CD4-positive, alpha-beta T cell (primary cell): ENCODE measurements at regions of chr15 and their contacts with region 1.

Region 1: GRCh38 chr15:62060113-62060895 is at the start of gene VPS13C:
- DNase-seq: peak; percentile 79 to 97 (median 88)
- ATAC-seq: peak; percentile 79
- H3K4me3 ChIP-seq: peak within 1 kb of the TSS; percentile 93
- H3K4me3 Mint-ChIP-seq: peak within 1 kb of the TSS; percentile 92
- H3K27ac ChIP-seq: peak within 1 kb of the TSS; percentile 84 to 87
- H3K27ac Mint-ChIP-seq: peak within 1 kb of the TSS; percentile 88
- H3K4me1 ChIP-seq: peaks cover 9% of the 10 kb centered on the region
- H3K4me1 Mint-ChIP-seq: peaks cover 54% of the 10 kb centered on the region
- H3K27me3 ChIP-seq: peaks cover 0 to 1% of the 10 kb centered on the region in 2 experiments
- H3K27me3 Mint-ChIP-seq: no peaks in the 10 kb centered on the region
- CTCF ChIP-seq: peak; percentile 84
- total RNA-seq, gene VPS13C: 69.7 to 73.2 TPM

Region 2: DNA sequence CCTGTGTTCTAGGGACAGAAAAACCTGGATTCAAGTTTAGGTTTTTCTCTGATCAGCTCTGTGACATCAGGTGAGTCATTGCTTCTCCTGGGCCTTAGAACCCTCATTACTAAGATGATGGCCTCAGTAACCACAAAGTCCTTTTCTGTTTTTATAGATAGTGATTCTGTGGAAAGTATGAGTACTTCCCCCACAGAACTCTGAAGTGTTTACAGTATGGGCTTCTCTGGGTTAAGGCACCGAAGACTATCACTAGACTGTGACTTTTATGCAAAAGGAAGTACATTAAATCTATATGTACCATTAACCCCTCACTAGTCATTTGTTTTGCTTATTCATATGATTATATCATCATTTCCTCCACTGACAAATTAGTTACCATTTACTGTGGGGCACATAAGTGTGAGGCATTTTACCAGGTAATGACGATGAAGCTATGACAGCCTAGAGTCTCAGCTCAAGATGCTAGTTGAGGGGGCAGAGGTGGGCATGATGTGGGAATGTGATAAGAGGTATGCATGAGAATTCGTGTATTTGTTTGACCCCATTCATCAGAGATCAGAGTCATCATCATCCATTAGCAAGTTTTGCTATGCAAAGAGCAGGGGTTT is 816.2 kb before region 1 on chr15:
- CTCF ChIA-PET with region 1: no interaction called
- POLR2A ChIA-PET with region 1: no interaction called
- intact Hi-C with region 1: no loop called
- DNase-seq: no peak
- ATAC-seq: no peak
- H3K4me3 ChIP-seq: no peak overlapping the region
- H3K4me3 Mint-ChIP-seq: no peak overlapping the region
- H3K27ac ChIP-seq: no peak overlapping the region
- H3K27ac Mint-ChIP-seq: no peak overlapping the region
- H3K4me1 ChIP-seq: no peaks in the 10 kb centered on the region
- H3K4me1 Mint-ChIP-seq: no peaks in the 10 kb centered on the region
- H3K27me3 ChIP-seq: peaks cover 6 to 12% of the 10 kb centered on the region in 2 experiments
- H3K27me3 Mint-ChIP-seq: peaks cover 65% of the 10 kb centered on the region
- CTCF ChIP-seq: no peak

Region 3: DNA sequence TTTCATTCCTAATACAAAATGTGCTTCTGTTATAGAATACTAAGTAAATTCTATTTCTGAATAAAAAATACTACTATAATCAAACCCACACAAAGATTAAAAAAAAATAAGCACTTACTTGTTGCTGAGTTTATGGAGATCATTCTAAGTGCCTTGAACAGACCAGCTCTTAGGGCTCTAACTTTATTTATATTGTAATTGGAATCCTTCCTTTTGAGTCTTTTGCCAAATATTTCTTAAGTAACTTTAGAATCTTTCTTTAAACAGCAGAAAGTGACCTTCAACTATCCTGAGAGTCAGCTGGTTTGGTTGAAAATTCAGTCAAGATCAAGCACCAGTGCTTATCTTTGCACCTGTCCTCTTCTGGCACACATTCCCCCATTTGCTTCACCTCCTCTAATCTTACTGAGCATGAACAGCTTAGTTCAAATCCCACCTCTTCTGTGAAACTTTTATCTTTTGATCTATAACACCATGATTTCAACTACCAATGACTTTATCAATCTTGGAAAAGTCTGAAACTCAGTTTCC is 149.4 kb before region 1 on chr15:
- CTCF ChIA-PET with region 1: no interaction called
- POLR2A ChIA-PET with region 1: no interaction called
- intact Hi-C with region 1: no loop called
- DNase-seq: no peak
- ATAC-seq: no peak
- H3K4me3 ChIP-seq: no peak overlapping the region
- H3K4me3 Mint-ChIP-seq: no peak overlapping the region
- H3K27ac ChIP-seq: no peak overlapping the region
- H3K27ac Mint-ChIP-seq: no peak overlapping the region
- H3K4me1 ChIP-seq: no peaks in the 10 kb centered on the region
- H3K4me1 Mint-ChIP-seq: no peaks in the 10 kb centered on the region
- H3K27me3 ChIP-seq: no peaks in the 10 kb centered on the region
- H3K27me3 Mint-ChIP-seq: no peaks in the 10 kb centered on the region
- CTCF ChIP-seq: no peak

Region 4: DNA sequence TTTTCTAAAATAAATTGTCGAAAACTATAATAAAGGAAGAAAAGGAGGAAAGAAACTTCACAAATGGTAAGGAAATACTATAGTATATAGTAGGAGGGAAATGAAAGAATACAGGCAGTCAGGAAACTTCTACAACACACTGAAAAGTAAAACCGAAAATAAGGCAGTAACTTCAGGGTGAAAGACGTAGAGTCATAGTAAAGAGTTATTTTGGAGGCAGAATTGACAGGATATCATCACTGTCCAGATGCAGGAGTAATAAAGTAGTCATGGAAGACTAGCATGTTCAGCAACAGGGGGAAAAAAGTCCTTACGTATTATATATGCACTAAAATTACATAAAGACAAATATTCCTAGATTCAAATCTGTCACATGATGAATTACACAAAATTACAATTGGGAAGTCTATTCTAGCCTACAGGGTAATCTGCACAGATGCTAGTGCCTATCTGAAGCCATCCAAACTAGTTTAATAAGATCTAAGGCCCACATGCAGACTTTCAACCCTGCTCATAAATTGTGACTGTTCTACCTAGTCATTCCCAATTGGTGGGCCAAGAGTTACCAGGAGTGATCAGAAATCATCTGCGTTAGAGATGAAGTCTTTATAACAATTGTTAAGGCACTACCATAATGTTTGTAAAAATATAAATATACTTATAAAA is 14.1 kb before region 1 on chr15:
- CTCF ChIA-PET with region 1: interaction called, 11 read pairs
- POLR2A ChIA-PET with region 1: interaction called, 4 read pairs
- intact Hi-C with region 1: loop called in 1 of 2 experiments (anchors 1 kb)
- DNase-seq: peak in 1 of 14 experiments; percentile 28
- ATAC-seq: no peak
- H3K4me3 ChIP-seq: no peak overlapping the region
- H3K4me3 Mint-ChIP-seq: peak overlapping the region; percentile 28
- H3K27ac ChIP-seq: no peak overlapping the region
- H3K27ac Mint-ChIP-seq: peak overlapping the region; percentile 12
- H3K4me1 ChIP-seq: peaks cover 3% of the 10 kb centered on the region
- H3K4me1 Mint-ChIP-seq: peaks cover 43% of the 10 kb centered on the region
- H3K27me3 ChIP-seq: no peaks in the 10 kb centered on the region
- H3K27me3 Mint-ChIP-seq: no peaks in the 10 kb centered on the region
- CTCF ChIP-seq: no peak

Region 5: GRCh38 chr15:62128916-62129315 is 68.6 kb after region 1 on chr15:
- CTCF ChIA-PET with region 1: no interaction called
- POLR2A ChIA-PET with region 1: interaction called, 11 read pairs
- intact Hi-C with region 1: no loop called
- DNase-seq: peak in 3 of 14 experiments; percentile 20 to 51 (median 35)
- ATAC-seq: peak; percentile 67
- H3K4me3 ChIP-seq: no peak overlapping the region
- H3K4me3 Mint-ChIP-seq: no peak overlapping the region
- H3K27ac ChIP-seq: no peak overlapping the region
- H3K27ac Mint-ChIP-seq: peak overlapping the region; percentile 0
- H3K4me1 ChIP-seq: peaks cover 15% of the 10 kb centered on the region
- H3K4me1 Mint-ChIP-seq: peaks cover 43% of the 10 kb centered on the region
- H3K27me3 ChIP-seq: no peaks in the 10 kb centered on the region
- H3K27me3 Mint-ChIP-seq: no peaks in the 10 kb centered on the region
- CTCF ChIP-seq: no peak